ENCODE measurements at regions of chr10 and their contacts with region 1.

Region 1: GRCh38 chr10:11260170-11260569 is 242.5 kb downstream of the CELF2 start:
- DNase-seq: no peak
- H3K4me3 ChIP-seq: no peak overlapping the region
- H3K27ac ChIP-seq: no peak overlapping the region
- H3K4me1 ChIP-seq: peaks cover 16 to 98% (median 50%) of the 10 kb centered on the region in 6 donors
- H3K27me3 ChIP-seq: no peaks in the 10 kb centered on the region
- CTCF ChIP-seq: no peak
- POLR2A ChIP-seq: no peak

Region 2: GRCh38 chr10:11180228-11180627 is 79.9 kb before region 1 on chr10:
- intact Hi-C with region 1: loop called (anchors 10 kb)
- DNase-seq: peak; percentile 84
- H3K4me3 ChIP-seq: peak overlapping the region in 7 of 8 donors; percentile 1 to 61 (median 15)
- H3K27ac ChIP-seq: peak overlapping the region in 7 of 8 donors; percentile 55 to 99 (median 96)
- H3K4me1 ChIP-seq: peaks cover 42 to 100% (median 96%) of the 10 kb centered on the region in 6 donors
- H3K27me3 ChIP-seq: no peaks in the 10 kb centered on the region
- CTCF ChIP-seq: no peak
- POLR2A ChIP-seq: no peak

Region 3: DNA sequence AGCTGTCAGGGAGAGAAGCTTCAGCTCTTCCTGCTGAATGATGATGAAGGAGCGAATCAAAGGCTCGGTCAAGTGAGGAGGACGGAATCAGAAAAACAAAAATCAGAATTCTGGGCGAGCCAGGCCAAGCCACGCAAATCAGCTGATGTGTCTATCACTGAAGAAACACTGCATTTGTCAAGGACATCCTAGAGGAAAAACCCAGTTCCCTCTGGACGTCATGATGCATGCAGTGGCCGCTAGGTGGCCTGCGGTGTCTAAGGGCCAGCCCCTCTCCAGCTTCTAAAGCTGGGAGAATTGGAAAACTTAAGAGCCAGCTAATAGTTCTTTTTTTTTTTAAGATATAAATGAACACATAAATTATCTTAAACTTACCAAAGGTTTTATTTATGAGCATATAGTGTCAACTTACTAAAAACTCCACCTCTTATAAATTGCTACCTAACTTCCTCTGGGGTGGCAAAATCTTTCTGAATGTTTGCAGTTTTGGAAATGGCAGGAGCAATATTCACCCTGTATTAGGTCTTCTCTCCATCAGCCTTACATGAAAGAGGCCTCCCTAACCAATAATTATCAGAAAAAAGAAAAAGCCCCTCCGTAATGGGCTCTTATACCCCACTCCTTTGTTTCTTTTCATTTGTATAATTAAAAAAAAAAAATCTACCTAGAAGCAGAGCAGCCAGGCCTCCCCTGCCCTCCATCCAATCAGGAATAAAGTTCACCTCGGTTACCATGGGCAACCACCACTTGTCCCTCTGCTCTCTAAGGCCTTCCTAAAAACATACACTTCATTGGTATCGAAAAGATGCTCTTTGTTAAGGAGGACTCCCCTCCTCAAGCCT is 164.5 kb after region 1 on chr10:
- intact Hi-C with region 1: no loop called
- DNase-seq: no peak
- H3K4me3 ChIP-seq: no peak overlapping the region
- H3K27ac ChIP-seq: no peak overlapping the region
- H3K4me1 ChIP-seq: peaks cover 0 to 4% (median 0%) of the 10 kb centered on the region in 6 donors
- H3K27me3 ChIP-seq: no peaks in the 10 kb centered on the region
- CTCF ChIP-seq: peak; percentile 23 to 80 (median 55)
- POLR2A ChIP-seq: no peak